B cell (primary cell): ENCODE measurements at regions of chr10 and their contacts with region 1.

Region 1: DNA sequence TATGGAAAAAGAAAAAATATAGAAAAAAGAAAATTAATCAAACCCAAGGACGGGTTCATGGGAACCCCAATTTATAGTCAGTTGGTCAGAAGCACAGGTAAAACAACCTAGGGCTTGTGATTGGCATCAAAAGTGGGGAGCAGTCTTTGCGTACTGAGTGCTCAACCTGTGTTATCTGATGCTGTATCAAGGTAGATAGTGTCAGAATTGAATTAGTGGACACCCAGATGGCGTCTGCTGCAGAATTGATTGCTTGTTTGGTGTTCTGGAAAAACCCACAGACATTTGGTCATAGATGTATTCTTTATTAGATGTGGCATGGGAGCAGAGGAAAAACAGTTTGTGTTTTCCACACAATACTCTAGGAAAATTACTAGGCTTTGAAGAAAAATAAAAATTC is 39.6 kb downstream of the NEUROG3 start:
- DNase-seq: no peak
- ATAC-seq: no peak
- H3K4me3 ChIP-seq: no peak overlapping the region
- H3K4me3 Mint-ChIP-seq: no peak overlapping the region
- H3K27ac ChIP-seq: no peak overlapping the region
- H3K27ac Mint-ChIP-seq: no peak overlapping the region
- H3K4me1 ChIP-seq: no peaks in the 10 kb centered on the region
- H3K4me1 Mint-ChIP-seq: no peaks in the 10 kb centered on the region
- H3K27me3 ChIP-seq: peaks cover 0 to 3% (median 0%) of the 10 kb centered on the region in 4 experiments
- H3K27me3 Mint-ChIP-seq: peaks cover 15% of the 10 kb centered on the region
- CTCF ChIP-seq: no peak

Region 2: GRCh38 chr10:69141304-69141703 is 392.4 kb before region 1 on chr10:
- CTCF ChIA-PET with region 1: no interaction called
- POLR2A ChIA-PET with region 1: no interaction called
- intact Hi-C with region 1: no loop called
- DNase-seq: no peak
- ATAC-seq: no peak
- H3K4me3 ChIP-seq: no peak overlapping the region
- H3K4me3 Mint-ChIP-seq: no peak overlapping the region
- H3K27ac ChIP-seq: no peak overlapping the region
- H3K27ac Mint-ChIP-seq: no peak overlapping the region
- H3K4me1 ChIP-seq: no peaks in the 10 kb centered on the region
- H3K4me1 Mint-ChIP-seq: peaks cover 16% of the 10 kb centered on the region
- H3K27me3 ChIP-seq: no peaks in the 10 kb centered on the region
- H3K27me3 Mint-ChIP-seq: no peaks in the 10 kb centered on the region
- CTCF ChIP-seq: no peak

Region 3: DNA sequence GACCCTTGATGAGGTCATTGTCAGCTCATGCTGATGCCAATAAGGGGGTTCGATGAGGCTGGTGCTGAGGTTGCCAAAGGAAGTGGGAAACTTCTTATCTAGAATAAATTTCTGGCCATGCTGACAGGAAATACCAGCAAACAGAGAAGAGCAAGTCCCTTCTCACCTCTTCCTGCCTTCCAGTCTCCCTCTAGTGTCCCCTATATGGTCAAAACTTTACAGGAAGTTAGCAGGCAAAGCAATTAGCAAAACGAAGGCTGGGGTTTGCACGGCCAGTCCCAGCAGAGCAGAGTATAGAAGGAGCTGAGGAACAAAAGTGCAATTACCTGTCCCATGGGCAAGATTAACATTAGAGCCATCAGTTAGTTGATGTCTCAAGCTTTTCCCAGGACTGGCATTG is 54.7 kb after region 1 on chr10:
- CTCF ChIA-PET with region 1: no interaction called
- POLR2A ChIA-PET with region 1: no interaction called
- intact Hi-C with region 1: loop called (anchors 2 kb)
- DNase-seq: no peak
- ATAC-seq: no peak
- H3K4me3 ChIP-seq: no peak overlapping the region
- H3K4me3 Mint-ChIP-seq: no peak overlapping the region
- H3K27ac ChIP-seq: no peak overlapping the region
- H3K27ac Mint-ChIP-seq: no peak overlapping the region
- H3K4me1 ChIP-seq: no peaks in the 10 kb centered on the region
- H3K4me1 Mint-ChIP-seq: no peaks in the 10 kb centered on the region
- H3K27me3 ChIP-seq: no peaks in the 10 kb centered on the region
- H3K27me3 Mint-ChIP-seq: peaks cover 11% of the 10 kb centered on the region
- CTCF ChIP-seq: no peak

Region 4: DNA sequence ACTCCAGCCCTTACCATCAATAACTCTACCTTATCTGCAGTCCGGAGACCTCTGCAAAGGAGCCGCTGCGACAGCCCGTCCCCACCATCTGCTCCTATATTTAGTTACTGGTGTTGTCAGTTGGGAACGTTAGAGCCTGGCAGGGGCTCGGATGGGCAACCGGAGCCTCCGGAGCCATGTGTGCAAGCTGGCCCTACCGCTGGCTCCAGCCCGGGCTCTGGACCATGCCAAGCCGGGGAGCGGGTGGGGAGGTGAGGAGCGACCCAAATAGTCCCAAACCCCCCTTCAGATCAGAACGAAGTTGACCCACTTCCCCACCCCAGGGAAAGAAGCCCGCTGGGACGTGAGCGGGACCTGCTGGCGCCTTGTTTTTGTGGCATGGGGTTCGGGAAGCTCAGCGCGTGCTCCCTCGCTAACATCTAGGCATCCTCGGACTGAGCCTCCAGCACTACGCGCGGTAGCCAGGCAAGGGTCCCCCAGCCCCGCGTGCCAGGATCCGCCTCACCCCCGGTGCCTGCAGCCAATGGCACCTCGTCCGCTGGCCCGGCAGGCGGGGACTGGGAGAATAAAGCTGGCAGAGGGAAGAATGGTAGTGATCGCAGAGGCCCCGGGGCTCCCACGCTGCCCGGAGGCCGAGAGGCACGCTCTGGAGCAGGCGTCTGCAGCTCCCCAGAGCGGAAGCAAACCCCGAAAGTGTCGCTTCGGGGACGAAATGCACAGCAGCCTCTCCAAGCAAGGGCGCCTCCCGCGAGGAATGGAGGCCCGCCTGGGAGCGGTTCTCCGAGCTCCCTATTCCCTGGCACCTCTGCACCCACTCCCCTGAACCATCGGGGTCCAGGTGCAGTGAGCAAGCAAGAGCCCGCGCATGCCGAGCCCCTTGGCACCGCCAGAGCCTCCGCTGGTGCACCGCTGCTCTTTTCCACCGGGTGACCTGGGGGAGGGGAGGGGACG is 848.1 kb after region 1 on chr10:
- CTCF ChIA-PET with region 1: no interaction called
- POLR2A ChIA-PET with region 1: no interaction called
- intact Hi-C with region 1: no loop called
- DNase-seq: no peak
- ATAC-seq: peak; percentile 8
- H3K4me3 ChIP-seq: peak overlapping the region; percentile 56 to 70 (median 64)
- H3K4me3 Mint-ChIP-seq: peak overlapping the region; percentile 90
- H3K27ac ChIP-seq: no peak overlapping the region
- H3K27ac Mint-ChIP-seq: peak overlapping the region; percentile 41
- H3K4me1 ChIP-seq: peaks cover 7 to 14% of the 10 kb centered on the region in 2 donors
- H3K4me1 Mint-ChIP-seq: peaks cover 12% of the 10 kb centered on the region
- H3K27me3 ChIP-seq: peaks cover 0 to 26% (median 3%) of the 10 kb centered on the region in 4 experiments
- H3K27me3 Mint-ChIP-seq: peaks cover 3% of the 10 kb centered on the region
- CTCF ChIP-seq: no peak